ENCODE measurements at regions of chr12 and their contacts with region 1.

Region 1: DNA sequence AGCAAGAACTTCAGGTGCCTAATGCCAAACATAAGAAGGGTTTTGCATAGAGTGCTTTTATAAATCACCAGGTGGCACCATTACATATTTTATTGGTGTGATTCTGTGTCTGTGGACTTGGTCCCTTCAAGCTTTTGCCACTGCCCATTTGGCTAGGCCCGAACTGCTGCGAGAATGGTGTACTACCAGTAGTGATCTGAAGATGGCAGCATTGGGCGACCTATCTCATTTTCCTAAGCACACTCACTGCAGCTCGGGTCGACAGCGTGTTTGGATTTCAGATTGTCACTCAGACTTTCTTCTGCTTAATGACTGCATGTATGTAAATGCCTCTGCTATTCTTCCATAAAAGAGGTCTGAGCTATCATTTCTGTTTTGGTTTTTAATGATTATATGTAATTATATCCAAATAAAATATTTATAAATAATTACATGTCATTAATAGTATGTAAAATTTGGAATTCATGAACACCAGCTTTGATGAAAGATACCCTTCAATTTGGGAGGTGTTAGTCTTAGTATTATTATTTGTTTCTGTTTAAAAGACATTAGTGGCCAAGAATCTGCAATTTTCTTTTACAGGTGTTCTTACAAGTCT is 78.5 kb downstream of the TPH2 start:
- DNase-seq: peak; percentile 93
- H3K4me3 ChIP-seq: no peak overlapping the region
- H3K27ac ChIP-seq: no peak overlapping the region
- H3K4me1 ChIP-seq: no peaks in the 10 kb centered on the region
- H3K27me3 ChIP-seq: no peaks in the 10 kb centered on the region
- CTCF ChIP-seq: peak; percentile 65 to 84 (median 73)
- EP300 ChIP-seq: no peak
- POLR2A ChIP-seq: no peak

Region 2: GRCh38 chr12:71994726-71995125 is 22.4 kb before region 1 on chr12:
- intact Hi-C with region 1: no loop called
- DNase-seq: no peak
- H3K4me3 ChIP-seq: no peak overlapping the region
- H3K27ac ChIP-seq: no peak overlapping the region
- H3K4me1 ChIP-seq: no peaks in the 10 kb centered on the region
- H3K27me3 ChIP-seq: no peaks in the 10 kb centered on the region
- CTCF ChIP-seq: no peak
- EP300 ChIP-seq: no peak
- POLR2A ChIP-seq: no peak

Region 3: GRCh38 chr12:72282721-72283120 is 265.6 kb after region 1 on chr12:
- intact Hi-C with region 1: loop called (anchors 10 kb)
- DNase-seq: no peak
- H3K4me3 ChIP-seq: no peak overlapping the region
- H3K27ac ChIP-seq: no peak overlapping the region
- H3K4me1 ChIP-seq: no peaks in the 10 kb centered on the region
- H3K27me3 ChIP-seq: peaks cover 0 to 20% (median 0%) of the 10 kb centered on the region in 4 donors
- CTCF ChIP-seq: peak in 2 of 3 experiments; percentile 19 to 30
- EP300 ChIP-seq: no peak
- POLR2A ChIP-seq: no peak

Region 4: DNA sequence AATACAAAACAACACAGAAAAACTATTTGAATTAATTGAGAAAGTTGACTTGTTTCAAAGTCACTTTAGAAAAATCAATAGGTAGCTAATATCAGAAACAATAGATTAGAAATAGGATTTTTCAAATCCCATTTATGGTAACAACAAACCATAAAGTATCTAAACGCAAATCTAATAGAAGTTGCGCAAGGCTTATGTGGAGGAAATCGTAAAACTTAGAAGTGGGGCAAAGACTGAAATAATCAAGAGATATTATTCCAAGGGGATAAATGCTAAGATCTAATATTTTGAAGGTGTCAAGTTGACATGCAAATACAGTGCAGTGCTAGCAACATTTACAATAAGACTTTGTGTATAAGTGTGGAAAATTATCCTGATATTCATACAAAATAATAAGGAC is 342.3 kb after region 1 on chr12:
- intact Hi-C with region 1: no loop called
- DNase-seq: no peak
- H3K4me3 ChIP-seq: no peak overlapping the region
- H3K27ac ChIP-seq: no peak overlapping the region
- H3K4me1 ChIP-seq: no peaks in the 10 kb centered on the region
- H3K27me3 ChIP-seq: no peaks in the 10 kb centered on the region
- CTCF ChIP-seq: no peak
- EP300 ChIP-seq: no peak
- POLR2A ChIP-seq: no peak